HepG2 (cell line): ENCODE measurements at regions of chr15 and their contacts with region 1.

Region 1: GRCh38 chr15:75367913-75368688 is at the start of gene MAN2C1:
- DNase-seq: peak; percentile 95
- ATAC-seq: peak; percentile 91
- H3K4me3 ChIP-seq: peak within 1 kb of the TSS; percentile 80 to 92 (median 91)
- H3K27ac ChIP-seq: peak within 1 kb of the TSS; percentile 98
- H3K4me1 ChIP-seq: peaks cover 39% of the 10 kb centered on the region
- H3K27me3 ChIP-seq: no peaks in the 10 kb centered on the region
- CTCF ChIP-seq: peak; percentile 98
- EP300 ChIP-seq: peak; percentile 50 to 68; a peak in 2 of 4 replicates
- POLR2A ChIP-seq: peak; percentile 85 to 98
- RAD21 ChIP-seq: peak; percentile 59
- total RNA-seq, gene MAN2C1: 19.5 and 71.0 TPM in 2 replicates

Region 2: DNA sequence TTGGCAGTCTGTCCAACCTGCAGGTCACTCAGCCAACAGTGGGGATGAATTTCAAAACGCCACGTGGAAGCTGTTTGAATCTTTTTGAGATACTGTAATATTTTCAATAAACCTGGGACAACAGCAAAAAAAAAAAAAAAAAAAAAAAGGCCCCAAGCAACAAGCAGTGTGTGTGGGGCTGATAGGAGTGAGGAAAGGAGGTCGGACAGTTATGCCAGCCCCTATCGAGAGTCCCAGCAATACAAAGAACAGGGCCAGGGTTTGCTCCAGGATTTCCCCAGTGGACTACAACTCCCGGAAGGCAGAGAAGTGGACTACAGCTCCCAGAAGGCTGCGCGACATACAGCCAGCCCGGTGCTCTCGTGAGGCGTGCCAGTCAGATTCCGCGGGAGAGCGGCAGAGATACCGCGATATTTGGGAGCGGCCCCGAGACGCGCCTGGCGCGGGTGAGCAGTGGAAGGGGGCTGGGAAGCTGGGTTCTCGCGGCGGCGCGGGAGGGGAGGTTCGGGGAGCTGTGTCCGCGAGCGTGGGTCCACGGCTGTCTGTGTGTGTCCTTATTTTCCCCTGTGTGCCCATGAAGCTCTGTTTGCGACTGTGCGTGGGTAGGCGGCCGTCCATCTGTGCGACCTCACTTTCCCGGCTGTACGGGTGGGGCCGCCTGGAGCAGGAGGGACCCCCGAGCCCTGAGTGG is 344.8 kb before region 1 on chr15 and contains the start of gene PPCDC:
- CTCF ChIA-PET with region 1: no interaction called
- POLR2A ChIA-PET with region 1: interaction called, 11 read pairs
- in situ Hi-C with region 1: no loop called
- intact Hi-C with region 1: no loop called
- DNase-seq: peak; percentile 94
- ATAC-seq: peak; percentile 98
- H3K4me3 ChIP-seq: peak within 1 kb of the TSS; percentile 87 to 95 (median 94)
- H3K27ac ChIP-seq: peak within 1 kb of the TSS; percentile 80
- H3K4me1 ChIP-seq: peaks cover 25% of the 10 kb centered on the region
- H3K27me3 ChIP-seq: no peaks in the 10 kb centered on the region
- CTCF ChIP-seq: no peak
- EP300 ChIP-seq: 0 out of 4 replicates have a peak, but pooled peaks of 1 of the 2 experiments have one; percentile 37
- POLR2A ChIP-seq: peak; percentile 95 to 98
- RAD21 ChIP-seq: peak; percentile 45
- total RNA-seq, gene PPCDC: 9.9 and 12.3 TPM in 2 replicates

Region 3: DNA sequence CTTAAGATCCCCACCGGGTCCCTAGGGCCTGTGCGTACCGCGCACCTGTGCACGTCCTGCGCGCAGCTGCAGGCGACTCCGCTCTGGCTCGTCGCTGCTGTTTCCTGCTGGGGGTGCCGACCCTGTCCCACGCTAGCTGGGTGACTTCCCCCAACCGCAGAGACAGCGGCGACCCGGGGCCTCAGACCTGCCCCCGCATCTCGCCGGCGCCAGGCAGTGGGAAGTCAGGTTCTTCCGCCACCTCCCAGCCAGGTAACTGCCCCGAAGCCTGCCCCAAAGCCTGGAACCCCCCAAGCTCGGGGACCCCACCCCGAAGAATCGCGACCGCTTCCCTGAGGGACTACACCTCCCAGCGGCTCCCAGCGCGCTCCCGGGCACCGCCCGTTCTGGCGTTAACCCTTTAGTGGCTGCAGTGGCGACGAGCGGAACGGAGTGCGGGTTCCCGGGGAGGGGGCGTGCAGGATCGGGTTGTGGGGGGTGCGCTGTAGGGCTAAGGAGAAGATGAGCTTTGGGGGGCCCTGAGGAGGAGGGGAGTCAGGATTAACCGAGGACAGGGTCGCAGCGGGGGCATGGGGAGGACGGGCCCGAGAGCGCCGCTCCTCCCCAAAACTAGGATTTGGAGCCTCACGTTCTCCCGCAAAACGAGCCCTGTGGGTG is 20.8 kb before region 1 on chr15:
- CTCF ChIA-PET with region 1: no interaction called
- POLR2A ChIA-PET with region 1: interaction called, 42 read pairs
- in situ Hi-C with region 1: no loop called
- intact Hi-C with region 1: loop called (anchors 1 kb)
- DNase-seq: no peak
- ATAC-seq: peak; percentile 75
- H3K4me3 ChIP-seq: peak overlapping the region; percentile 70 to 96 (median 94)
- H3K27ac ChIP-seq: peak overlapping the region; percentile 47
- H3K4me1 ChIP-seq: peaks cover 12% of the 10 kb centered on the region
- H3K27me3 ChIP-seq: no peaks in the 10 kb centered on the region
- CTCF ChIP-seq: peak; percentile 21
- EP300 ChIP-seq: no peak
- POLR2A ChIP-seq: peak in 1 of 2 experiments; percentile 58; a peak in 2 of 4 replicates
- RAD21 ChIP-seq: 0 out of 2 replicates have a peak, but pooled peaks have one; percentile 19

Region 4: DNA sequence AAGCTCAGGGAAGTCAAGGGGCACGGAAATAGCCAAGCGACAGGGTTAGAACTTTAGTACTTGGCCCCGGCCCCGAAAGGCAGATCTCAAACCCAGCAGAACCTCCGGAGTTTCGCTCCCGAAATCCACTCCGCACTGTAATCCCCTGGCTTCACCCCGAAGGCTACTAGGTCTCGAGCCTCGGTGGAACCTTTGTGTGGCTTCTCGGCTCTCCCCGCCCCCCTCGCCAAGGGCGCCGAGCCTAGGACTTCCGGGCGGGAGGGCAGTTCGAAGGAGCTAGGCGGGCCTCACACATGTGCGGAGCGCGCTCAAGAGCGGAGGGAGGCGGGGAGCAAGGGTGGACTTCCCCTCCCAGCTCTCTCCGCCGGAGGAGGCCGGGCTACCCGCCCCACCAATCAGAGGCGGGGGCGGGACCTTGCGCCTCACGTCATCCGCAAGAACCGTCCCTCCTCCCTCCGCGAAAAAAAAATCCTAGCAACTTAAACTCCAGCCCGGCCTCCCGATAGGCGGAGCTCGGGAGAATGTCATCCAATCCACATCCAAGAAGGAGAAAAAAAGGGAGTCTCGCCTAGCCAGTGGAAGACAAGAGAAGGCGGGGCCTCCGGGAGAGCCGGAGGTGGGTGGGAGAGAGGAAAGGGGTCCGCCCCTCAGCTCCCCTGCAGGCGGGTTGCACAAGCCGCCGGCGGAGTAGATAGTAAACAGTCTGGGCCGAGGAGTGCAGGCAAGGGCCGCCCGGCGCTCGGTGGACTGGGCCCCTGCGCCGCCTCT is 85.8 kb after region 1 on chr15:
- CTCF ChIA-PET with region 1: no interaction called
- POLR2A ChIA-PET with region 1: interaction called, 185 read pairs
- in situ Hi-C with region 1: loop called (anchors 5 kb)
- intact Hi-C with region 1: loop called (anchors 5 kb)
- DNase-seq: peak; percentile 100
- ATAC-seq: peak; percentile 38
- H3K4me3 ChIP-seq: peak overlapping the region; percentile 91 to 93 (median 93)
- H3K27ac ChIP-seq: peak overlapping the region; percentile 94
- H3K4me1 ChIP-seq: peaks cover 37% of the 10 kb centered on the region
- H3K27me3 ChIP-seq: no peaks in the 10 kb centered on the region; a peak in 1 of 5 replicates
- CTCF ChIP-seq: no peak
- EP300 ChIP-seq: no peak
- POLR2A ChIP-seq: peak in 1 of 2 experiments; percentile 62; a peak in 2 of 4 replicates
- RAD21 ChIP-seq: no peak

Region 5: GRCh38 chr15:75639709-75640482 is 271.8 kb after region 1 on chr15 and contains the start of gene IMP3:
- CTCF ChIA-PET with region 1: no interaction called
- POLR2A ChIA-PET with region 1: interaction called, 25 read pairs
- in situ Hi-C with region 1: loop called (anchors 10 kb)
- intact Hi-C with region 1: no loop called
- DNase-seq: peak; percentile 97
- ATAC-seq: peak; percentile 92
- H3K4me3 ChIP-seq: peak within 1 kb of the TSS; percentile 77 to 94 (median 87)
- H3K27ac ChIP-seq: peak within 1 kb of the TSS; percentile 94
- H3K4me1 ChIP-seq: peaks cover 32% of the 10 kb centered on the region
- H3K27me3 ChIP-seq: peaks cover 0 to 2% of the 10 kb centered on the region in 2 experiments; a peak in 1 of 5 replicates
- CTCF ChIP-seq: peak; percentile 27; the same call in 1 of the 2 replicates
- EP300 ChIP-seq: no peak; a peak in 1 of 4 replicates
- POLR2A ChIP-seq: peak in 1 of 2 experiments; percentile 99; a peak in 2 of 4 replicates
- RAD21 ChIP-seq: peak; percentile 58
- total RNA-seq, gene IMP3: 143 and 165 TPM in 2 replicates

Region 6: DNA sequence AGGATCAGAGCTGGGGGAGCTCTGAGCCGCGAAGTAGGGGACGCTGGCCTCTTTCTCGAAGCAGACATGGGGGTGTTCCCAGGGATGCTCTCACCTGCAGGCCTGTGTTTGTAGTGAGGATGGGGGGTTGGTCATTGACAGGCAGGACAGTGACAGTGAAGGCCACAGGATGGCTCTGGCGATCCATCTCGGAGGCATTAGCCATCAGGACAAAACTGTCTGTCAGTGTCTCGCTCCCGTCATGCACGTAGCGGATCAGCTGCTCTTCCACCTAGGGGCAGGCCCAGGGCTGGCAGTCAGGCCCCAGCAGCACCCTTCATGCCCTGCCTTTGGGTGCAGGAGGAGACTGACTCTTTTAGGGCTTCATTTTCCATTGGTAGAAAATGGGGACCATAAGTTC is 316.5 kb after region 1 on chr15:
- CTCF ChIA-PET with region 1: no interaction called
- POLR2A ChIA-PET with region 1: no interaction called
- in situ Hi-C with region 1: no loop called
- intact Hi-C with region 1: loop called (anchors 10 kb)
- DNase-seq: peak; percentile 56
- ATAC-seq: peak; percentile 44
- H3K4me3 ChIP-seq: peak overlapping the region in 1 of 3 experiments; percentile 33; a peak in 1 of 6 replicates
- H3K27ac ChIP-seq: no peak overlapping the region
- H3K4me1 ChIP-seq: peaks cover 41% of the 10 kb centered on the region
- H3K27me3 ChIP-seq: peaks cover 6 to 25% of the 10 kb centered on the region in 2 experiments
- CTCF ChIP-seq: peak; percentile 69
- EP300 ChIP-seq: no peak
- POLR2A ChIP-seq: no peak
- RAD21 ChIP-seq: peak; percentile 44; the same call in 1 of the 2 replicates